ENCODE measurements at regions of chr12 and their contacts with region 1.

Region 1: GRCh38 chr12:11648831-11649702 is at the start of gene ETV6:
- DNase-seq: peak; percentile 85
- H3K4me3 Mint-ChIP-seq: peak within 1 kb of the TSS; percentile 87
- H3K27ac Mint-ChIP-seq: peak within 1 kb of the TSS; percentile 98
- H3K4me1 Mint-ChIP-seq: peaks cover 28% of the 10 kb centered on the region
- H3K27me3 Mint-ChIP-seq: no peaks in the 10 kb centered on the region
- total RNA-seq, gene ETV6: 55.3 to 57.5 TPM

Region 2: GRCh38 chr12:11581179-11581755 is 67.8 kb before region 1 on chr12:
- CTCF ChIA-PET with region 1: interaction called, 5 read pairs
- POLR2A ChIA-PET with region 1: interaction called, 3 read pairs
- intact Hi-C with region 1: loop called (anchors 1 kb)
- DNase-seq: peak; percentile 63
- H3K4me3 Mint-ChIP-seq: no peak overlapping the region
- H3K27ac Mint-ChIP-seq: no peak overlapping the region
- H3K4me1 Mint-ChIP-seq: peaks cover 23% of the 10 kb centered on the region
- H3K27me3 Mint-ChIP-seq: peaks cover 2% of the 10 kb centered on the region

Region 3: GRCh38 chr12:11730299-11731041 is 81.4 kb after region 1 on chr12:
- CTCF ChIA-PET with region 1: no interaction called
- POLR2A ChIA-PET with region 1: interaction called, 10 read pairs
- intact Hi-C with region 1: loop called (anchors 1 kb)
- DNase-seq: peak; percentile 10
- H3K4me3 Mint-ChIP-seq: no peak overlapping the region
- H3K27ac Mint-ChIP-seq: peak overlapping the region; percentile 62
- H3K4me1 Mint-ChIP-seq: peaks cover 76% of the 10 kb centered on the region
- H3K27me3 Mint-ChIP-seq: no peaks in the 10 kb centered on the region

Region 4: DNA sequence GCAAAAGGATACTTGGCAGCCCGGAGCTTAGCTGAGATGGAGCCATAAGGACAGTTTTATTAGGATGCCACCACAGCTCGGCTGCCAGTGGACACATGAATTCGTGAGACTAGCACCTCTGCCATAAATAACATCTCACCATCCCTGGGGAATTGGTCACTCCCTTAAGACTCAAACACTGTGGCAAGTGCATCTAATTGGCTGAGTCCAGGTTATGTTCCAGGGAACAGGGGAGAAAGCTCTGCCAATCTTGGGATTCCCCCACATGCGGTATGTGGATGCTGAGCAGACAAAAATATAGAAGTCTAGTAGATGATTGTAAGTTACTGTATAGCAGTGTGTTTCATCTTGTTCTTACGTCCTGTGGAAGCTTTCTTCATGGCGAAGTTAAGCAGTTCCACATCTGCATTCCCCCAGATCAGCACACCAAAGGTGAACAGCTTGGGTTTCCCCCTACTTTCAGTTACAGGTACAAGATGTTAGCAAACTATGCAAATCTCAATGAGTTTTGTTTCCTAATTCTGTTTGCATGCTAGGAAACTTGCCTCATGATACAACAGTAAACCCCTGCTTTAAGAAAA is 131.5 kb after region 1 on chr12:
- CTCF ChIA-PET with region 1: interaction called, 3 read pairs
- POLR2A ChIA-PET with region 1: interaction called, 16 read pairs
- intact Hi-C with region 1: no loop called
- DNase-seq: peak; percentile 34
- H3K4me3 Mint-ChIP-seq: no peak overlapping the region
- H3K27ac Mint-ChIP-seq: peak overlapping the region; percentile 89
- H3K4me1 Mint-ChIP-seq: peaks cover 83% of the 10 kb centered on the region
- H3K27me3 Mint-ChIP-seq: no peaks in the 10 kb centered on the region

Region 5: DNA sequence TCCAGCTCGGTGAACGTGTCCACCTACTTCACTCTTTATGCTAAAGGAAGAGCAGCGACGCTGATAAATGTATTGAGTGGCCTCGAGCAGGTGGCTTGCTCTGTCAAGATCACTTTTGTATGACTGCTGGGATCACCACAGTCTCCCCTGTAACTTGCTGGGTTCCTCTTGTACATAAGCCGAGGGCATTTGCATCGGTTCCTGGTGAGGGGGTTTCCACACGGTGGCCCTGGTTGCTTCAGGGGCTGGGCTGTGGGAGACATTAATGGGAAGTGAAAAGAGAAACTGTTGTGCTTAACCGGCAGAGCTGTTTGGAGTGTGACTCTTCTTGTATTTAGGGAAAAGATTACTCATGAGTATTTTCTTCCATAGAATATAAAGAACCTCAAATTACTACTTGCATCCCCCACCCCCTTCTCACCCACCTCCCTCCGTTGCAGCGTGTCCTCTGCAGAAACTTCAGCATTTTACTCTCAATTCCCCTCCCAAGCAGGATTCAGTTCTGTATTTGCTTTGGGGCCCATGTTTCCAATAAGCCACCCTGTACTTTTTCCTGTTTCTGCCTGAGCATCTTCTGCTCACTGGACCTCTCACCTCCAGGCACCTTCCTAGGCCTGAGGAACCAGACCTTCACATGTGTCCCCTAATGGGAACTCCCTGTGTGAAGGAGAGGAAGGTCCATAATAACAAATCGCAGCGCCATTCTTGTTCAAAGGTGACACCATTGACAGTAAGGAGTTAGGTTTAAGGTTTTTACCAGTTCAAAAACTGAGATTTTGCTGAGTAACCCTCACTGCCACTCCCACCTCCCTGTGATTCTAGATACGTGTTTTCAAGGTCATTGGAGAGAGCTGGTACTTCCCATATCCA is 187.4 kb after region 1 on chr12:
- CTCF ChIA-PET with region 1: no interaction called
- POLR2A ChIA-PET with region 1: interaction called, 3 read pairs
- intact Hi-C with region 1: loop called (anchors 1 kb)
- DNase-seq: peak; percentile 88
- H3K4me3 Mint-ChIP-seq: peak overlapping the region; percentile 54
- H3K27ac Mint-ChIP-seq: peak overlapping the region; percentile 98
- H3K4me1 Mint-ChIP-seq: peaks cover 85% of the 10 kb centered on the region
- H3K27me3 Mint-ChIP-seq: no peaks in the 10 kb centered on the region

Region 6: DNA sequence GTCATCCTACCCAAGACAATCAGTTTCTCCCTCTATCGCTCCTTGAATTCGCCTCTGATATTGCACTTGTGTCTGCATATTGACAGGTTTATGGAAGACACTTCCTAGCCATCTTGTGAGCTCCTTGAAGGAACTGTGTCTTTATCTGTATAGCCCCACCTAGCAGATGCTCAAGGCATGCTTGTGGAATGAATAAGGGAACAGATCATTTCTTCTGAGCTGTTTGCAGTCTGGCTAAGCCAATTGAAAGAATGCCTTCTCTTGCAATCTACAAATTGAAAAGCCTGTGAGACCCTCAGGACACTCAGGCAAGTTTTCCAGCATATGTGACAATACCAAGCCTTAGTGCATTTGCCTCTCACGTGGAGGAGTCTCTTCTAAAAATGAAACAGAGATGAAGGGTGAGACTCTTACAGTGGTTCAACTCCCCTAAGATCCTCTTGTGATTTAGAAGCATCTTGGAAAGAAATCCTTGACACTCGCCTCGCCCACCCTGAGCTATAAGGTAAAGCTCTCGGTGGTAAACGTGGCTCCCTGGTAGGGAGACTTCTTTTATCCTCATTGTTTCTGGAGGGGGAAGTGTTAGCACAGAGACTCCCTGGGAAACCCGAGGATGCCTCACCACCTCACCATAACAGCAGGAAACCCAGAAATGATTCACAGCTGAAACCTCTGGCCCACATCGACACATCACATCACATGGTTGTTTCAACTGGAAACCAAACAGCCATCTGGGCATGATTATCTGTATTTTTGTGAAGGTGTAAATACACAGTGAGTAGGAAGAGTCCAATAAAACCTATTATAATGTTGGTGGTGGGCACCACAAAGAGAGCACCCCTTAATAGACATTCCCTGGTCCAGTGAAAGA is 309.4 kb after region 1 on chr12:
- CTCF ChIA-PET with region 1: no interaction called
- POLR2A ChIA-PET with region 1: interaction called, 3 read pairs
- intact Hi-C with region 1: loop called (anchors 1 kb)
- DNase-seq: peak; percentile 80
- H3K4me3 Mint-ChIP-seq: peak overlapping the region; percentile 50
- H3K27ac Mint-ChIP-seq: peak overlapping the region; percentile 90
- H3K4me1 Mint-ChIP-seq: peaks cover 37% of the 10 kb centered on the region
- H3K27me3 Mint-ChIP-seq: no peaks in the 10 kb centered on the region